H1 (cell line): ENCODE measurements at regions of chr12 and their contacts with region 1.

Region 1: GRCh38 chr12:12724661-12725545 is 7.7 kb downstream of the CDKN1B start:
- DNase-seq: peak in 1 of 2 experiments; percentile 84
- H3K4me3 ChIP-seq: peak overlapping the region; percentile 74 to 98 (median 88)
- H3K27ac ChIP-seq: peak overlapping the region; percentile 88
- H3K4me1 ChIP-seq: peaks cover 0 to 8% (median 0%) of the 10 kb centered on the region in 4 experiments; a peak in 4 of 7 replicates
- H3K27me3 ChIP-seq: peaks cover 0 to 2% (median 0%) of the 10 kb centered on the region in 4 experiments; a peak in 1 of 7 replicates
- CTCF ChIP-seq: peak in 1 of 3 experiments; percentile 8; a peak in 1 of 4 replicates
- EP300 ChIP-seq: peak in 1 of 2 experiments; percentile 41; a peak in 1 of 3 replicates
- POLR2A ChIP-seq: peak; percentile 59 to 90
- RAD21 ChIP-seq: no peak

Region 2: DNA sequence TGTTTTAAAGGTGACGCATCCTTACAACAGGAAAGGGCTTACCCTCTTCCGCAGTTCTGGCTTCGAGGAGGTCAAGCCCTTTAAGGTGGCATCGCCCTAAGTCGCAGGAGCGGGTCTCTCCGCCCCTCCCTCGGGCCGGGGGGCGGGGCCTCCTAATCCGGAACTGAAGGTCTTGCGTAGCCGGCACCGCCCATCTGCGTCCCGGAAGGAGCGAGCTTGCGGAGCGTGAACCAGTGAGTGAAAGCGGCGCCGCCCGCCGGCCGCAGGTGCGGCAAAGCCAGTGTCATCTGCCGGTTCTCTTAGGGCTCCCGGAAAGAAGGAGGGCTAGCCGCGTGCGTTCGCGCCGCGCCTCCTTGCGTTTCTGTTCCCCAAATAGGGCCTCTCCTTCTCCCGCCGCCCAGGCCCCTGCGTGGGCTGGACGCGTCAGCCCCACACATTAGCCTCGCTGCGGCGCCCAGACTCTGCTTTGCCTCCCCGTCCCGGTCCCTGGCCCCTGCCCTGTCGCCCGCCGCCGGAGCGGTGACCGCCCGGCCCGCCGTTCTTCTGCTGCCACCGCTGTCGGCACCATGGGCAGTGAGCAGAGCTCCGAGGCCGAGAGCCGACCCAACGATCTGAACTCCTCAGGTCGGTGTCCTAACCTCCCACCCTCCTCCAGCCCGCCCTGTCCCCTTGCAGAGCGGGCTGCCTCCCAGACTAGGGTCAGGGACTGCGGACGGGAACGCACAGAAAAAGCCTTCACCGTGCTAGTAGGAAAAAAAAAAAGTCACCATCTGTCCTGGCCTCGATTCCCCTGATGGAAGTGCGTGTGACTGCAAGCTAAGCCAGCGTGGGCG is 367.8 kb before region 1 on chr12 and contains the start of gene BORCS5:
- CTCF ChIA-PET with region 1: no interaction called
- POLR2A ChIA-PET with region 1: interaction called, 10 read pairs
- DNase-seq: peak; percentile 96 to 97
- H3K4me3 ChIP-seq: peak within 1 kb of the TSS; percentile 68 to 86 (median 83)
- H3K27ac ChIP-seq: peak within 1 kb of the TSS; percentile 62
- H3K4me1 ChIP-seq: peaks cover 0 to 6% (median 2%) of the 10 kb centered on the region in 4 experiments; a peak in 3 of 7 replicates
- H3K27me3 ChIP-seq: no peaks in the 10 kb centered on the region
- CTCF ChIP-seq: peak; percentile 17 to 25 (median 20); a peak in 3 of 4 replicates
- EP300 ChIP-seq: no peak; a peak in 1 of 3 replicates
- POLR2A ChIP-seq: peak; percentile 89 to 97
- RAD21 ChIP-seq: peak; percentile 19 to 28; a peak in 1 of 4 replicates
- total RNA-seq, gene BORCS5: 15.4 and 17.4 TPM in 2 replicates